Cardiac septum (tissue), 1 donor: ENCODE measurements at regions of chr1 and their contacts with region 1.

Region 1: GRCh38 chr1:32933742-32934322 is 30.8 kb downstream of the RNF19B start:
- DNase-seq: no peak

Region 2: GRCh38 chr1:32892368-32893197 is 41.2 kb before region 1 on chr1:
- intact Hi-C with region 1: no loop called
- DNase-seq: peak; percentile 74

Region 3: GRCh38 chr1:33055210-33056008 is 121.6 kb after region 1 on chr1:
- intact Hi-C with region 1: loop called (anchors 2 kb)
- DNase-seq: peak; percentile 89

Region 4: GRCh38 chr1:33086384-33086850 is 152.6 kb after region 1 on chr1:
- intact Hi-C with region 1: loop called (anchors 2 kb)
- DNase-seq: peak; percentile 82